GM12878 (cell line): ENCODE measurements at regions of chr2 and their contacts with region 1.

Region 1: DNA sequence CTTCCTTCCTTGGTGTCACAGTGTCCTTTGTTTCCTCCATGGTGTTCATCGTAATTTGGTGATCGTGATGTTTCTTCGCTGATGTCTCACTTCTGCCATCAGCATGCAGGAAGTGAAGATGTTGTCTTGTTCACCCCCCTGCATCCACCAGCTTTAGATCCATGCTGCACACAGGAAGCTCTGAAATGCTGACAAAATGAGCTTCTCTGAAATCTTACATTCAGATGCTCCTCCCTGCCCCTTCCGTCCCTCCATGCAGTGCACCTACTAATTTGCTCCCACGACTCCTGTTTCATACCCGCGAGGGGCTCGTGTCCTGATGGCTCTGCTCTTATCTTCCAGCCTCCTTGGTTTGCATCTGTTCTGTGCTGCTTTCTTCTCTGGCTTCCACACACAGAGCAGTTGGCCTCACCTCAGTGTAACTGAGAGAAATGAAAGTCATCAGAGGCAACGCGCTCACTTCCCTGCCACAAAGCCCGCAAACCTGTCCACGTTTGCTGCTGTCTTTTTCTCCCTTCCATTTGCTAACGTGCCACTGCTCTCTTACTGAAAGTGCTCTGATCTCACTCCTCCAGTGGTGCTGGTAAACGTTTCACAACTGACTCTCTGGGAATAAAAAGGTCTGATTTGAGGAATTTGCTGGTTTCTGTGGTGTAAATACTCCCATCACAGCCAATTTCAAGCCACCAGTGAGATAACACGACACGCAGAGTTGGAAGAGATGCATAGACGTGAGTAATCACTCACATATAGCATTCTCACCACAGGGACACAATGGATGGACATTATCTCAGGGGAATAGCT is 41.0 kb upstream of the MGAT4A start:
- DNase-seq: no peak
- ATAC-seq: peak; percentile 66
- H3K4me3 ChIP-seq: peak overlapping the region; percentile 26; the same call in 1 of the 2 replicates
- H3K27ac ChIP-seq: peak overlapping the region; percentile 63
- H3K4me1 ChIP-seq: peaks cover 16% of the 10 kb centered on the region
- H3K27me3 ChIP-seq: no peaks in the 10 kb centered on the region
- CTCF ChIP-seq: no peak
- EP300 ChIP-seq: no peak
- POLR2A ChIP-seq: peak; percentile 41; the same call in 1 of the 2 replicates
- RAD21 ChIP-seq: no peak

Region 2: GRCh38 chr2:98757904-98758421 is 14.0 kb before region 1 on chr2:
- CTCF ChIA-PET with region 1: interaction called, 7 read pairs
- POLR2A ChIA-PET with region 1: interaction called, 6 read pairs
- RAD21 ChIA-PET with region 1: interaction called, 5 read pairs
- SMC1A ChIA-PET with region 1: interaction called, 26 read pairs
- in situ Hi-C with region 1: no loop called
- intact Hi-C with region 1: no loop called
- DNase-seq: peak; percentile 81
- ATAC-seq: peak; percentile 89
- H3K4me3 ChIP-seq: 0 out of 2 replicates have a peak overlapping the region, but pooled peaks have one; percentile 17
- H3K27ac ChIP-seq: peak overlapping the region; percentile 35
- H3K4me1 ChIP-seq: peaks cover 40% of the 10 kb centered on the region
- H3K27me3 ChIP-seq: no peaks in the 10 kb centered on the region
- CTCF ChIP-seq: no peak
- EP300 ChIP-seq: peak in 1 of 2 experiments; percentile 29; a peak in 2 of 4 replicates
- POLR2A ChIP-seq: no peak
- RAD21 ChIP-seq: no peak